AG04450 (cell line): ENCODE measurements at regions of chr9 and their contacts with region 1.

Region 1: GRCh38 chr9:35790385-35791296 is 750 bp upstream of the NPR2 start:
- DNase-seq: peak; percentile 65
- H3K4me3 ChIP-seq: no peak overlapping the region
- H3K27ac ChIP-seq: peak overlapping the region; percentile 31
- H3K27me3 ChIP-seq: peaks cover 3% of the 10 kb centered on the region
- CTCF ChIP-seq: peak; percentile 91

Region 2: GRCh38 chr9:35771534-35771933 is 19.1 kb before region 1 on chr9:
- CTCF ChIA-PET with region 1: interaction called, 19 read pairs
- POLR2A ChIA-PET with region 1: no interaction called
- DNase-seq: no peak
- H3K4me3 ChIP-seq: no peak overlapping the region
- H3K27ac ChIP-seq: no peak overlapping the region
- H3K27me3 ChIP-seq: peaks cover 21% of the 10 kb centered on the region
- CTCF ChIP-seq: no peak

Region 3: DNA sequence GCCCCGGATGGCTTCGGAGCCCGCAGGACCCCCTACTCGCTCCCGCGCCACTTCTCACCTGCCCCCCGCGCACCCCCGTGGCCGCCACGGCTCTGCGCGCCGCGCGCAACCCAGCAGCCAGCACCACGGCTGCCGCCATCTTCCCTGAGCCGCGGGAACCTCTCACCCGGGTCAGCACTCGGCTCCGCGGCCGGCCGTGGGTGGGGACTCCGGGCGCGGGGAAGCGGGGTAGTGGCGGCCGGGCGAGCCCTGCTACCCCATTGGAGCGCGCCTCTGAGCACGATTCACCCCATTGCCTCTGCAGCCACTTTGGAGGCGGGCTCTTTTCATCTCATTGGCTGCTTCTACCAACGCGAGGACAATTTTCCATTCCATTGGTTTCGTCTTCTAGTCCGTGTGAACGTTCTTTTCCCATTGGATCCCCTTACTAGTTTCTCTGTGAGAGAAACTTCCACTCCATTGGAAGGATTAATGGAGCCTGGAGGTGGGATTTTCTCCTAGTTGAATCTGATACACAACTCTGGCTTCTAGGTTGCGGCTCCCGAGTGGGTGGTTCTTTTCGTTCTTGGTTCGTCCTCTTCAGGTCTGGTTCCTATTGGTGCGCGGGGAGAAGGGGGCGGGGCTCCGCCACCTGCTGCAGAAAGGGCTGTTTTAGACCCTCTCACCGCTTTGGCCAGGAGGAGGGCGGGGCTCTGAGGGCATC is 24.4 kb after region 1 on chr9 and contains the start of gene HINT2:
- CTCF ChIA-PET with region 1: interaction called, 48 read pairs
- POLR2A ChIA-PET with region 1: interaction called, 4 read pairs
- DNase-seq: peak; percentile 97
- H3K4me3 ChIP-seq: peak within 1 kb of the TSS; percentile 87
- H3K27ac ChIP-seq: peak within 1 kb of the TSS; percentile 70
- H3K27me3 ChIP-seq: peaks cover 6% of the 10 kb centered on the region
- CTCF ChIP-seq: no peak
- polyA plus RNA-seq, gene HINT2: 17.5 and 18.5 TPM in 2 replicates

Region 4: GRCh38 chr9:35826071-35826701 is 35.5 kb after region 1 on chr9:
- CTCF ChIA-PET with region 1: interaction called, 60 read pairs
- POLR2A ChIA-PET with region 1: no interaction called
- DNase-seq: no peak
- H3K4me3 ChIP-seq: no peak overlapping the region
- H3K27ac ChIP-seq: no peak overlapping the region
- H3K27me3 ChIP-seq: peaks cover 2% of the 10 kb centered on the region
- CTCF ChIP-seq: peak; percentile 85

Region 5: DNA sequence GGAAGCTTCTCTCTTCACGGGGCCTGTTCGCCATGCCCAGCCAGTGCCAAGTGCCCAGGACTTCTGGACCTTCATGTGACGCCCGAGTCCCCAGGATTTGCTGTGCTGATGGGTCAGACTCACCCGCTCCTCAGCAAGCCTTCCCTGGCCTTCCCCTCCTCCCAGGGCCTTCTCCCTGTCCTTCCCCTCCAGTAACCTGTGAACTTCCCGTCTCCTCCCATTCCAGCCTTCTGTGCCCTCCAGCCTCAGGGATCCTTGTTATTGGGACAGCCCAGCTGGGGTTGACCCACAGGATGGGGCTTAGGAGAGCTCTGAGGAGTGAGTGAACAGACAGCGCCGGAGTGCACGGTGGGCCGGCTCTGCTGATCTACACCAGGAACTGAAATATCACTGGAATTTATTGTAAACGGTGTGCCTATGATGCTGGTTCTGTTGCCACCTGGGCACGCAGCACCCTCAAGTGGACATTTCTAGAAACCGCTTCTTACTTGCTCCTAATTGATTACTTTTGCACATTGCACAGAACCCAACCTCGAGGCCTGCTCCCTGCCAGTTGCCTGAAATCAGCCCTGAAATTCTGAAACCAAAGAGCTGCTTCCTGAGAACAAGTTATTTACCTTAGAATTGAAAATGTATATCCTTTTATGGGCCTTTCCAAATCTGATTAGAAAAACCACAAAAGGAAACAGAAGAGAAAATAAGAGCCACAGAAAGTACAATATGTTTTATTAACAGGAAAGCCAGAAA is 120.1 kb after region 1 on chr9:
- CTCF ChIA-PET with region 1: interaction called, 10 read pairs
- POLR2A ChIA-PET with region 1: no interaction called
- DNase-seq: no peak
- H3K4me3 ChIP-seq: no peak overlapping the region
- H3K27ac ChIP-seq: no peak overlapping the region
- H3K27me3 ChIP-seq: no peaks in the 10 kb centered on the region
- CTCF ChIP-seq: peak; percentile 62

Region 6: DNA sequence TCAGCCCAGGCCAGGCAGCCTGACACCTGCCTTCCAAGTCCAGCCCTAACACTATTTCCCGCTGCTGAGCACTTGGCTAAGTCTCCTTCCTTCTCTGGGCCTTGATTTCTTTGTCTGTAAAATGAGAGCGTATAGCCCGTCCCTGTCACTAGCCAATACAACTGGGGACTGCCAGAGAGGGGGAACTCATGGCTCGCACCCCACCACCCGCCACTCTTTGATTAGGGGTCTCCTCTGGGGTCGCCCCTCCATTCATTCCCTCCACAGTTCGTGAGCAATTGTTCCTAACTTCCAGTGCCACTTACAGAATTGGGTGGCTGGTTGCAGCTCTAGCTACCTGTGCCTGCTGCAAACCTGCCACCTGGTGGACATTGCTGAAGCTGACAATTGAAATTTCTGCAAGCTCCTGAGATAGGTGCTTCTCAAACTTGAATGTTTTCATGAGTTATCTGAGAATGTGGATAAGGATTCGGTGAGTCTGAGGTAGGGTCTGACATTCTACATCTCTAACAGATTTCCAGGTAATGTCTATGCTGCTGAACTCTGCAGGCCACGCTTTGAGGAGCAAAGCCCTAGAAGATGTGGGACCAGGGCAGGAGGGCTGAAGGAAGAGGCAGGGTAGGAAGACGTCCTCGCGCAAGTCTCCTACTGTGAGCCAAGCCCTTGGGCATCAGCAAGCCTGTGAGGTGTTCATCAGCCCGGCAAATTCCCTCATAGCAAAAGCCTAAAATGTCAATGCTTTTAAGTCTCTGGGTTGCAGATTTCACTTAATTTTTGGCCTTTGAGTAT is 232.8 kb after region 1 on chr9:
- CTCF ChIA-PET with region 1: interaction called, 13 read pairs
- POLR2A ChIA-PET with region 1: no interaction called
- DNase-seq: no peak
- H3K4me3 ChIP-seq: no peak overlapping the region
- H3K27ac ChIP-seq: no peak overlapping the region
- H3K27me3 ChIP-seq: no peaks in the 10 kb centered on the region
- CTCF ChIP-seq: peak; percentile 87